ENCODE measurements at regions of chr13 and their contacts with region 1.

Region 1: DNA sequence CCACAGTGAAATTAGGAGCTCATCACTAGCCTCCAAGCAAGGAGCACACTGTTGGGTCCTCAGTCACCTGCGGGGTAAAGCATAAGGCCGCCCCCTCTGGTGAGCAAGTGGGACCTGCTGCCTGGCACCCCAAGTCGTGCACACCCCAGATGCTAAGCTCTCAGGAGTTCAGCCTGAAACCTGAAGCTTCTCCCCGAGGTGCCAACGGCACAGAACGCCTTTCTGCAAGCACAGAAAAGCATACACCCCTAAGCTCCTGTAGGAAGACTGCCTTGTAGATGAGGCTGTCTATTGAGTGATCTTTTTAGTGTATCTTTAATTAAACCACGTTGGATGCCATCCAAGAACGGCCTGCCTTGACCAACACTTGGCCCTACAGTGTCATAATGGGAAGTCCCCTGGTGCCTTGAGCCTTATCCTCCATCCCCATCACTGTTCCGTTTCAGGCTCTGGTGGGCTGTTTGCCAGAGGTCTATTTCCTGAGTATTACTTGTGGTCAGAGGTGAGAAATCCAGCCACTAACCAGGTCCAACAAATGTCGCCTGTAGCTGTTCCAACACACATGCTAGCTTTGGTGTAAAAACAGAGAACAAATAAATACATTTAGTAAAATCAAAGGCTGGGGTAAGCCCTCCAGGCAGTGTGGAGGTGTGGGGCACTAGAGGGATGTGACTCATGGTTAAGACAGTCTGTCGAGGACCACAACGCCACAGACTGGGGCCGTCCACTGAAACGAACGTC is 44.8 kb downstream of the C13orf42 start:
- DNase-seq: no peak

Region 2: GRCh38 chr13:49976314-49977258 is 1089.7 kb before region 1 on chr13:
- intact Hi-C with region 1: loop called (anchors 10 kb)
- DNase-seq: peak; percentile 79

Region 3: DNA sequence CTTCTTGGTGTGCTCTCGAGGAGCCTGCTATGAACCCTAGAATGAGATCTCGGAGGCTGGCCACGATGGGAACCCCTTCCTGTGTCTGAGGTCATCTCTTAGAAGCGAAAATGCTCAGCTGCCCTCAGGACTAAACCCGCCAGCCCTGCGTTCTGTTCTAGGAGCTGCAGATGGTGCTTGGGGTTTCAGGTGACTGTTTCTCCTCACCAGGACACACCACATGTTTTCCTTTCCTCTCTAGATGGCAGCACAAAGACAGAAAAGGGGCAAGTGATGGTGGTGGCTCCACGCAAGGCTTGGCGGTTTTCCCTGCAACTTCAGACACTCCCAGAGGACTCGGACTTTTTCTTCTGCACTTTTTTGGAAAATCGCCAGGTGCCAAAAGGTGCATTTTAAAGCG is 96.6 kb before region 1 on chr13:
- intact Hi-C with region 1: loop called (anchors 5 kb)
- DNase-seq: no peak

Region 4: GRCh38 chr13:51118809-51119431 is 52.7 kb after region 1 on chr13:
- intact Hi-C with region 1: no loop called
- DNase-seq: no peak